Activated CD8-positive, alpha-beta T cell treated with anti-CD3 and anti-CD28 coated beads for 36 hours (primary cell): ENCODE measurements at regions of chr9 and their contacts with region 1.

Region 1: GRCh38 chr9:89602978-89603766 is 1.6 kb upstream of the GADD45G start:
- DNase-seq: peak; percentile 94
- ATAC-seq: peak; percentile 35
- H3K4me3 Mint-ChIP-seq: peak overlapping the region; percentile 73
- H3K27ac Mint-ChIP-seq: peak overlapping the region; percentile 53
- H3K4me1 Mint-ChIP-seq: peaks cover 23% of the 10 kb centered on the region
- H3K27me3 Mint-ChIP-seq: peaks cover 2% of the 10 kb centered on the region
- CTCF ChIP-seq: peak; percentile 78

Region 2: GRCh38 chr9:89619019-89619418 is 15.8 kb after region 1 on chr9:
- CTCF ChIA-PET with region 1: interaction called, 12 read pairs
- POLR2A ChIA-PET with region 1: interaction called, 3 read pairs
- intact Hi-C with region 1: no loop called
- DNase-seq: no peak
- ATAC-seq: peak; percentile 61
- H3K4me3 Mint-ChIP-seq: no peak overlapping the region
- H3K27ac Mint-ChIP-seq: no peak overlapping the region
- H3K4me1 Mint-ChIP-seq: peaks cover 4% of the 10 kb centered on the region
- H3K27me3 Mint-ChIP-seq: no peaks in the 10 kb centered on the region
- CTCF ChIP-seq: no peak

Region 3: GRCh38 chr9:89743573-89744361 is 140.6 kb after region 1 on chr9:
- CTCF ChIA-PET with region 1: interaction called, 18 read pairs
- POLR2A ChIA-PET with region 1: interaction called, 5 read pairs
- intact Hi-C with region 1: no loop called
- DNase-seq: peak; percentile 80
- ATAC-seq: peak; percentile 77
- H3K4me3 Mint-ChIP-seq: peak overlapping the region; percentile 27
- H3K27ac Mint-ChIP-seq: peak overlapping the region; percentile 87
- H3K4me1 Mint-ChIP-seq: peaks cover 70% of the 10 kb centered on the region
- H3K27me3 Mint-ChIP-seq: peaks cover 5% of the 10 kb centered on the region
- CTCF ChIP-seq: no peak

Region 4: GRCh38 chr9:89999534-90000370 is 396.6 kb after region 1 on chr9:
- CTCF ChIA-PET with region 1: interaction called, 12 read pairs
- POLR2A ChIA-PET with region 1: no interaction called
- intact Hi-C with region 1: no loop called
- DNase-seq: peak; percentile 90
- ATAC-seq: peak; percentile 95
- H3K4me3 Mint-ChIP-seq: peak overlapping the region; percentile 61
- H3K27ac Mint-ChIP-seq: peak overlapping the region; percentile 87
- H3K4me1 Mint-ChIP-seq: peaks cover 28% of the 10 kb centered on the region
- H3K27me3 Mint-ChIP-seq: no peaks in the 10 kb centered on the region
- CTCF ChIP-seq: no peak

Region 5: GRCh38 chr9:90102292-90102901 is 499.2 kb after region 1 on chr9:
- CTCF ChIA-PET with region 1: interaction called, 355 read pairs
- POLR2A ChIA-PET with region 1: interaction called, 7 read pairs
- intact Hi-C with region 1: loop called (anchors 1 kb)
- DNase-seq: peak; percentile 87
- ATAC-seq: peak; percentile 100
- H3K4me3 Mint-ChIP-seq: no peak overlapping the region
- H3K27ac Mint-ChIP-seq: no peak overlapping the region
- H3K4me1 Mint-ChIP-seq: peaks cover 6% of the 10 kb centered on the region
- H3K27me3 Mint-ChIP-seq: peaks cover 4% of the 10 kb centered on the region
- CTCF ChIP-seq: peak; percentile 72